Activated B cell treated with CpG ODN at 0.5 μM for 24 hours (primary cell): ENCODE measurements at regions of chr7 and their contacts with region 1.

Region 1: GRCh38 chr7:98021588-98022351 is 31.8 kb upstream of the OCM2 start:
- DNase-seq: peak; percentile 76
- ATAC-seq: peak; percentile 81
- H3K4me3 Mint-ChIP-seq: no peak overlapping the region
- H3K27ac Mint-ChIP-seq: no peak overlapping the region
- H3K4me1 Mint-ChIP-seq: peaks cover 3% of the 10 kb centered on the region
- H3K27me3 Mint-ChIP-seq: peaks cover 20% of the 10 kb centered on the region
- CTCF ChIP-seq: peak; percentile 58

Region 2: GRCh38 chr7:98049034-98049433 is 27.3 kb after region 1 on chr7:
- CTCF ChIA-PET with region 1: no interaction called
- POLR2A ChIA-PET with region 1: no interaction called
- intact Hi-C with region 1: no loop called
- DNase-seq: no peak
- ATAC-seq: no peak
- H3K4me3 Mint-ChIP-seq: no peak overlapping the region
- H3K27ac Mint-ChIP-seq: no peak overlapping the region
- H3K4me1 Mint-ChIP-seq: peaks cover 6% of the 10 kb centered on the region
- H3K27me3 Mint-ChIP-seq: peaks cover 12% of the 10 kb centered on the region
- CTCF ChIP-seq: no peak

Region 3: DNA sequence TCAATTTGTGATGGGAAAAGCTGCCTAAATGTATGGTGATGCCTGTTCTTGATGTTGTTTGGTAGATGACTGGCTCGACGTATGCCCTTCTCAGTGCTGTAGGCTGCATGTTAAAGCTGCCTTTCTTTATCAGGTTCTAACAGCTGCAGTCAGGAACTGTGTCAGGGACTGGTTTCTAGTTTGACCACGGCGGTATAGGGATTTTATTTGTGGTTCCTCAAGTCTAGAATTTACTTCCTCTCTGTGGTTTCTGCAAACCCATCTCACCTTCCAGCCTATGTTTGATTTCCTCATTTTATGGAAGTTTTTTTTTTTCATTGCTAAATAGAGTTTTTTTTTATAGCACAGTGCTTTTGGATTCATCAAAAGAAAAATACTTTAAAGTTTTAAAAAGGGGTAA is 111.4 kb after region 1 on chr7:
- CTCF ChIA-PET with region 1: interaction called, 10 read pairs
- POLR2A ChIA-PET with region 1: no interaction called
- intact Hi-C with region 1: no loop called
- DNase-seq: no peak
- ATAC-seq: peak; percentile 70
- H3K4me3 Mint-ChIP-seq: peak overlapping the region; percentile 50
- H3K27ac Mint-ChIP-seq: no peak overlapping the region
- H3K4me1 Mint-ChIP-seq: peaks cover 72% of the 10 kb centered on the region
- H3K27me3 Mint-ChIP-seq: peaks cover 49% of the 10 kb centered on the region
- CTCF ChIP-seq: no peak

Region 4: GRCh38 chr7:98240961-98241674 is 219.3 kb after region 1 on chr7:
- CTCF ChIA-PET with region 1: interaction called, 3 read pairs
- POLR2A ChIA-PET with region 1: no interaction called
- intact Hi-C with region 1: loop called (anchors 1 kb)
- DNase-seq: no peak
- ATAC-seq: peak; percentile 71
- H3K4me3 Mint-ChIP-seq: no peak overlapping the region
- H3K27ac Mint-ChIP-seq: no peak overlapping the region
- H3K4me1 Mint-ChIP-seq: no peaks in the 10 kb centered on the region
- H3K27me3 Mint-ChIP-seq: no peaks in the 10 kb centered on the region
- CTCF ChIP-seq: no peak

Region 5: DNA sequence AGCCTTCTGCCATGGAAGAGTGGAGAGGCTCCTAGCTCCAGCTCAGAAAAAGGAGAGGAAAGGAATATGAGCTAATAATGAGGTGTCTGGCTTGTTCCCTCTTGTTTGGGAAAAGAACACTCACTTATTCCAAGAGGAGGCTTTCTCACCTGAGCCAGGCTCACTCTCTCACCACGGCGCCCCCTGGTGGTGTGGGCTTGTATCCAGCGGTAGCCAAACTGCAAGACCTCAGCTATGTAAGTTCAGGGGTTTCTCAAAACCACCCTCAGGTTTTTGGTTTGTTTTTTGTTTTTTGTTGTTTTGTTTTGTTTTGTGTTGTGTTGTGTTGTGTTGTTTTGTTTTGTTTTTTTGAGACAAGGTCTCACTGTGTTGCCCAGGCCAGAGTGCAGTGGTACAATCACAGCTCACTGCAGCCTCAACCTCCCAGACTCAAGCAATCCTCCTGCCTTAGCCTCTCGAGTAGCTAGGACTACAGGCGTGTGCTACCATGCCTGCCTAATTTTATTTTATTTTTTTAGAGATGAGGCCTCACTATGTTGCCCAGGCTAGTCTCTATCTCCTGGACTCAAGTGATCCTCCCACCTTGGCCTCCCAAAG is 724.0 kb after region 1 on chr7:
- CTCF ChIA-PET with region 1: no interaction called
- POLR2A ChIA-PET with region 1: no interaction called
- intact Hi-C with region 1: loop called (anchors 5 kb)
- DNase-seq: peak; percentile 62
- ATAC-seq: peak; percentile 31
- H3K4me3 Mint-ChIP-seq: no peak overlapping the region
- H3K27ac Mint-ChIP-seq: no peak overlapping the region
- H3K4me1 Mint-ChIP-seq: no peaks in the 10 kb centered on the region
- H3K27me3 Mint-ChIP-seq: peaks cover 12% of the 10 kb centered on the region
- CTCF ChIP-seq: peak; percentile 87